CD8-positive, alpha-beta memory T cell (primary cell): ENCODE measurements at regions of chr16 and their contacts with region 1.

Region 1: GRCh38 chr16:30956601-30957455 is 726 bp upstream of the SETD1A start:
- DNase-seq: peak; percentile 77 to 87 (median 83)
- H3K4me3 ChIP-seq: peak overlapping the region; percentile 98
- H3K4me3 Mint-ChIP-seq: peak overlapping the region; percentile 93 to 99 (median 97)
- H3K27ac ChIP-seq: peak overlapping the region; percentile 96
- H3K27ac Mint-ChIP-seq: peak overlapping the region; percentile 97 to 100 (median 98)
- H3K4me1 ChIP-seq: peaks cover 24% of the 10 kb centered on the region
- H3K4me1 Mint-ChIP-seq: peaks cover 26 to 42% (median 27%) of the 10 kb centered on the region in 3 donors
- H3K27me3 ChIP-seq: no peaks in the 10 kb centered on the region
- H3K27me3 Mint-ChIP-seq: no peaks in the 10 kb centered on the region

Region 2: GRCh38 chr16:30876867-30877266 is 80.0 kb before region 1 on chr16:
- CTCF ChIA-PET with region 1: no interaction called
- POLR2A ChIA-PET with region 1: no interaction called
- DNase-seq: no peak
- H3K4me3 ChIP-seq: peak overlapping the region; percentile 81
- H3K4me3 Mint-ChIP-seq: peak overlapping the region; percentile 86 to 98 (median 90)
- H3K27ac ChIP-seq: peak overlapping the region; percentile 84
- H3K27ac Mint-ChIP-seq: peak overlapping the region; percentile 90 to 98 (median 97)
- H3K4me1 ChIP-seq: peaks cover 31% of the 10 kb centered on the region
- H3K4me1 Mint-ChIP-seq: peaks cover 34 to 62% (median 46%) of the 10 kb centered on the region in 3 donors
- H3K27me3 ChIP-seq: no peaks in the 10 kb centered on the region
- H3K27me3 Mint-ChIP-seq: no peaks in the 10 kb centered on the region

Region 3: GRCh38 chr16:30941600-30942425 is 15.0 kb before region 1 on chr16:
- CTCF ChIA-PET with region 1: interaction called, 50 read pairs
- POLR2A ChIA-PET with region 1: no interaction called
- DNase-seq: peak; percentile 53 to 74 (median 55)
- H3K4me3 ChIP-seq: no peak overlapping the region
- H3K4me3 Mint-ChIP-seq: peak overlapping the region in 4 of 7 donors; percentile 34 to 84 (median 51)
- H3K27ac ChIP-seq: no peak overlapping the region
- H3K27ac Mint-ChIP-seq: peak overlapping the region in 4 of 8 donors; percentile 50 to 84 (median 59)
- H3K4me1 ChIP-seq: peaks cover 7% of the 10 kb centered on the region
- H3K4me1 Mint-ChIP-seq: peaks cover 10 to 24% (median 14%) of the 10 kb centered on the region in 3 donors
- H3K27me3 ChIP-seq: no peaks in the 10 kb centered on the region
- H3K27me3 Mint-ChIP-seq: no peaks in the 10 kb centered on the region